RWPE1 (cell line): ENCODE measurements at regions of chr12 and their contacts with region 1.

Region 1: GRCh38 chr12:25458047-25458552 is 95.0 kb downstream of the LMNTD1 start:
- DNase-seq: peak; percentile 91
- H3K27ac ChIP-seq: no peak overlapping the region
- CTCF ChIP-seq: no peak

Region 2: GRCh38 chr12:25404955-25405354 is 53.1 kb before region 1 on chr12:
- CTCF ChIA-PET with region 1: no interaction called
- POLR2A ChIA-PET with region 1: no interaction called
- DNase-seq: no peak
- H3K27ac ChIP-seq: no peak overlapping the region
- CTCF ChIP-seq: no peak

Region 3: DNA sequence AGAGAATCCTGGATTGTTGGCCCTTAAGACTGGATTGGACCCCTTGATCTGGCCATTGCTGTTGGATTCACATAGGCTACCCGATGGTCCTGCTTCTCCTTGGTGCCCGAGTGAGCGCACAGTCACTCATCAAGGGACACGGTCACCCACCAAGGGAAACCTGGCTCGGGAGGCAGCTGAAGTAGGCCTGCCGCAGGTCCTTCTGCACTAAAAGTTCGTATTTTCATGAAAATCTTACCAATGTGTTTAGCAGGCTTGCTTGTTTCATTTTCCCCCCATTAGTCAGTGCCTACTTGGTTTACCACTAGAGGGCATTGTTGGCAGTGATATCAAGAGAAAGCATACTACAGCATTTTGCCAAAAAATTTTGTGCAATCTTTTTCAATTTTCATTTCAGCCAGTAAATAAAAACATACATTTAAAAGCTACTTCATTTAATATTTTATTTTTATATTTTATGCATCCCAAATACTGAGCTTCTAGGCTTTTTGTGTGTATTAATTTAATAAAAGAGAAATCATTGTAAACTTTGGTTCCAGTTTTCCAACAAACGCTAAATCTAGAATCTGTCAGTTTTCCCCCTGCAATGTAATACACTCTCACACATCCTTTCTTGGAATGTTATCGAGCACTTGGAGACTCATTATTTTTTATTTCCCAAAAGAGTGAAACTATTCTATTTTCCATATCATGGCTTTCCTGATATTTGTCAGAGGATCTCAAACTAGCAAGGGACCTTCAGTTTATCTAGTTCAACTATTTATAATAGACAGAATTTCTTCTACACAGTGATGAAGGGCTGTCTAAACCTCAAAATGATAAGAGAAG is 21.7 kb before region 1 on chr12:
- CTCF ChIA-PET with region 1: interaction called, 12 read pairs
- POLR2A ChIA-PET with region 1: no interaction called
- DNase-seq: peak; percentile 73
- H3K27ac ChIP-seq: no peak overlapping the region
- CTCF ChIP-seq: peak; percentile 61

Region 4: DNA sequence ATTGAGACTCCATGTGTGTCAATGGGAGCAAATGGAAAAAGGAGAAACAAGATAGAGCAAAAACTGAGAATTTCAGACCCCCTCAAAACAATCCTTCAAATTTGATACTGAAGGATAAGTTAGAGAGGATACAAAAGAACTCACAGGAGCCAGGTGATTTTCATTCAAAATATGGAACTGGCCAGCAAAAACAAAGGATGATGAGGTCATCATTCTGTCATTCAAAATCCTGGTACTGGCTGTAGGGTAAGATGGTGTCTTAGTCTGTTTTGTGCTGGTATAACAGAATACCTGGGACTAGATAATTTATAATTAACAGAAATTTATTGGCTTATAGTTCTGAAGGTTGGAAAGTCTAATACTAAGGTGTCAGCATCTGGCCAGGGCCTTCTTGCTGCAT is 14.4 kb after region 1 on chr12:
- CTCF ChIA-PET with region 1: no interaction called
- POLR2A ChIA-PET with region 1: no interaction called
- DNase-seq: no peak
- H3K27ac ChIP-seq: no peak overlapping the region
- CTCF ChIP-seq: no peak